ENCODE measurements at regions of chrX and their contacts with region 1.

Region 1: GRCh38 chrX:23756157-23756559 is 13.1 kb upstream of the ACOT9 start:
- DNase-seq: peak; percentile 79
- H3K4me3 Mint-ChIP-seq: no peak overlapping the region
- H3K27ac Mint-ChIP-seq: no peak overlapping the region
- H3K4me1 Mint-ChIP-seq: peaks cover 6% of the 10 kb centered on the region
- H3K27me3 Mint-ChIP-seq: no peaks in the 10 kb centered on the region
- CTCF ChIP-seq: peak; percentile 65

Region 2: DNA sequence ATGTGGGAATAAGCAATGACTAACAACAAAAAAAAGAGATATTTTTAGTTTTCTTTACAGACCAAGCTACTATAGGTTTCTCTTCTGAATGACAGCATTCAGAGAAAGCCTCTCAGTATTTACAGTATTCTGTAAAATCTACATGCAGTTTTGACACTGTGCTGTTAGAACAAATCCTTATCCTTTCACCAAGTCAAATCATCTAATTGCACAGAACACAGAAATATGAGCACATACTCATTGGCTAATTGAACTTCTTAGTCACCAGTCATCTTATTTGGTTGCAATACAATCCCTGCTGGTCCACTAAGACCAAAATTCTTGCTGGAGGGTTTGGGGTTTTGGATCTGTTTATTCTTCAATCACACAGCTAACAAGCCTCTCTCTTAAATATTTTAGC is 18.7 kb before region 1 on chrX:
- CTCF ChIA-PET with region 1: no interaction called
- POLR2A ChIA-PET with region 1: no interaction called
- intact Hi-C with region 1: no loop called
- DNase-seq: peak; percentile 33
- H3K4me3 Mint-ChIP-seq: no peak overlapping the region
- H3K27ac Mint-ChIP-seq: no peak overlapping the region
- H3K4me1 Mint-ChIP-seq: peaks cover 13% of the 10 kb centered on the region
- H3K27me3 Mint-ChIP-seq: peaks cover 10% of the 10 kb centered on the region
- CTCF ChIP-seq: no peak

Region 3: DNA sequence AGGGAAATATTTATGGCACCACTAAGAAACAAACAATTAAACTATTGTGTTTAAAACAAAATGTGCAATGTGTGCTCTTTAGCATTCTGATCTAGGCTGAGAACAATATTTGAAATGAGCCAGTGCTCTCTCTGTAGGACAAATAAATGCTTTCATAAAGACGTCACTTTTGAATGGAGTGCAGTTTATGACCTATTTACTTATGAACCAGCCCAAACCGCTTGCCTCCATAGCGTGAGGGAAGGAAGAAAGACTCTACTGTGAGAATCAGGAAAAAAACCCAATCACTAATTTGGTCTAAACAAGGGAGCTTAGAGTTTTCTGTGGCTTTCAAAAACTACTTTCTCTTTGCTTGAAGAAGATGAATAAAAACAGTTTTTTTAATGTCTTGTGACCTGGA is 66.2 kb after region 1 on chrX:
- CTCF ChIA-PET with region 1: no interaction called
- POLR2A ChIA-PET with region 1: no interaction called
- intact Hi-C with region 1: loop called (anchors 2 kb)
- DNase-seq: no peak
- H3K4me3 Mint-ChIP-seq: no peak overlapping the region
- H3K27ac Mint-ChIP-seq: no peak overlapping the region
- H3K4me1 Mint-ChIP-seq: peaks cover 6% of the 10 kb centered on the region
- H3K27me3 Mint-ChIP-seq: peaks cover 25% of the 10 kb centered on the region
- CTCF ChIP-seq: no peak

Region 4: DNA sequence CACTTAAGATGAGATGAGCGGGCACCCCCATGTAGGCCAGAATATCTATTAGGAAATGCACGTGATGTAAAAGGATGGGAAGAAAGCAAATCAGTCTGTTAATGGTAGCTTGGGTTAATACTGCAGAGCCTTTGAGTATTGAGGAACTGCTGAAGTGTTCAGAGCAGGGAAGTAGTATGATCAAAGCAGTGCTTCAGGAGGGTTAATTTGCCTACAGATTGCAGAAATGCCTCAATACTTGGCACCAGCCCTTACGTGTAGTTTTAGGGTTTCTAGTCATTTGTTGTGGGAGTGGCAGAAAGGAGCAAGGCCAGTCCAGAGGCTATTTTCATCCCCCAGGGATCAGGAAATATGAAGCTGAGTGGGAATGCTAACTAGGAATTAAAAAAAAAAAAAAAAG is 413.1 kb after region 1 on chrX:
- CTCF ChIA-PET with region 1: no interaction called
- POLR2A ChIA-PET with region 1: no interaction called
- intact Hi-C with region 1: no loop called
- DNase-seq: no peak
- H3K4me3 Mint-ChIP-seq: peak overlapping the region; percentile 3
- H3K27ac Mint-ChIP-seq: peak overlapping the region; percentile 71
- H3K4me1 Mint-ChIP-seq: peaks cover 44% of the 10 kb centered on the region
- H3K27me3 Mint-ChIP-seq: no peaks in the 10 kb centered on the region
- CTCF ChIP-seq: no peak